CD14-positive monocyte (primary cell): ENCODE measurements at regions of chr6 and their contacts with region 1.

Region 1: GRCh38 chr6:134373282-134373922 is 55.5 kb upstream of the SGK1 start:
- DNase-seq: peak; percentile 95 to 99 (median 97)
- H3K4me3 ChIP-seq: peak overlapping the region; percentile 2 to 70 (median 53)
- H3K4me3 Mint-ChIP-seq: peak overlapping the region; percentile 64 to 86
- H3K27ac ChIP-seq: peak overlapping the region; percentile 97 to 98
- H3K27ac Mint-ChIP-seq: peak overlapping the region; percentile 97 to 99 (median 98)
- H3K4me1 ChIP-seq: peaks cover 54 to 55% of the 10 kb centered on the region in 2 donors
- H3K4me1 Mint-ChIP-seq: peaks cover 62% of the 10 kb centered on the region
- H3K27me3 ChIP-seq: no peaks in the 10 kb centered on the region
- H3K27me3 Mint-ChIP-seq: peaks cover 0 to 8% (median 2%) of the 10 kb centered on the region in 3 donors
- CTCF ChIP-seq: no peak

Region 2: GRCh38 chr6:134223796-134224420 is 149.5 kb before region 1 on chr6:
- intact Hi-C with region 1: no loop called
- DNase-seq: no peak
- H3K4me3 ChIP-seq: no peak overlapping the region
- H3K4me3 Mint-ChIP-seq: no peak overlapping the region
- H3K27ac ChIP-seq: no peak overlapping the region
- H3K27ac Mint-ChIP-seq: no peak overlapping the region
- H3K4me1 ChIP-seq: peaks cover 7 to 9% of the 10 kb centered on the region in 2 donors
- H3K4me1 Mint-ChIP-seq: peaks cover 7% of the 10 kb centered on the region
- H3K27me3 ChIP-seq: no peaks in the 10 kb centered on the region
- H3K27me3 Mint-ChIP-seq: peaks cover 0 to 4% (median 0%) of the 10 kb centered on the region in 3 donors
- CTCF ChIP-seq: no peak

Region 3: GRCh38 chr6:134247231-134247833 is 126.1 kb before region 1 on chr6:
- intact Hi-C with region 1: loop called in 1 of 2 experiments (anchors 5 kb)
- DNase-seq: peak; percentile 46 to 94 (median 87)
- H3K4me3 ChIP-seq: peak overlapping the region in 1 of 3 experiments; percentile 34
- H3K4me3 Mint-ChIP-seq: peak overlapping the region in 1 of 2 donors; percentile 53
- H3K27ac ChIP-seq: peak overlapping the region; percentile 69 to 80
- H3K27ac Mint-ChIP-seq: peak overlapping the region; percentile 90 to 96 (median 94)
- H3K4me1 ChIP-seq: peaks cover 30 to 43% of the 10 kb centered on the region in 2 donors
- H3K4me1 Mint-ChIP-seq: peaks cover 50% of the 10 kb centered on the region
- H3K27me3 ChIP-seq: no peaks in the 10 kb centered on the region
- H3K27me3 Mint-ChIP-seq: peaks cover 0 to 3% (median 0%) of the 10 kb centered on the region in 3 donors
- CTCF ChIP-seq: no peak

Region 4: GRCh38 chr6:134339216-134339615 is 34.2 kb before region 1 on chr6:
- intact Hi-C with region 1: loop called in 1 of 2 experiments (anchors 5 kb)
- DNase-seq: no peak
- H3K4me3 ChIP-seq: no peak overlapping the region
- H3K4me3 Mint-ChIP-seq: no peak overlapping the region
- H3K27ac ChIP-seq: no peak overlapping the region
- H3K27ac Mint-ChIP-seq: peak overlapping the region in 4 of 7 donors; percentile 25 to 63 (median 54)
- H3K4me1 ChIP-seq: peaks cover 40 to 41% of the 10 kb centered on the region in 2 donors
- H3K4me1 Mint-ChIP-seq: peaks cover 41% of the 10 kb centered on the region
- H3K27me3 ChIP-seq: no peaks in the 10 kb centered on the region
- H3K27me3 Mint-ChIP-seq: peaks cover 0 to 2% (median 0%) of the 10 kb centered on the region in 3 donors
- CTCF ChIP-seq: no peak

Region 5: GRCh38 chr6:134416418-134417154 is 43.2 kb after region 1 on chr6:
- intact Hi-C with region 1: loop called in 1 of 2 experiments (anchors 5 kb)
- DNase-seq: peak; percentile 29 to 45 (median 38)
- H3K4me3 ChIP-seq: no peak overlapping the region
- H3K4me3 Mint-ChIP-seq: no peak overlapping the region
- H3K27ac ChIP-seq: peak overlapping the region in 1 of 2 donors; percentile 98
- H3K27ac Mint-ChIP-seq: peak overlapping the region in 6 of 7 donors; percentile 56 to 100 (median 94)
- H3K4me1 ChIP-seq: peaks cover 49 to 51% of the 10 kb centered on the region in 2 donors
- H3K4me1 Mint-ChIP-seq: peaks cover 55% of the 10 kb centered on the region
- H3K27me3 ChIP-seq: no peaks in the 10 kb centered on the region
- H3K27me3 Mint-ChIP-seq: peaks cover 2 to 5% (median 2%) of the 10 kb centered on the region in 3 donors
- CTCF ChIP-seq: no peak

Region 6: DNA sequence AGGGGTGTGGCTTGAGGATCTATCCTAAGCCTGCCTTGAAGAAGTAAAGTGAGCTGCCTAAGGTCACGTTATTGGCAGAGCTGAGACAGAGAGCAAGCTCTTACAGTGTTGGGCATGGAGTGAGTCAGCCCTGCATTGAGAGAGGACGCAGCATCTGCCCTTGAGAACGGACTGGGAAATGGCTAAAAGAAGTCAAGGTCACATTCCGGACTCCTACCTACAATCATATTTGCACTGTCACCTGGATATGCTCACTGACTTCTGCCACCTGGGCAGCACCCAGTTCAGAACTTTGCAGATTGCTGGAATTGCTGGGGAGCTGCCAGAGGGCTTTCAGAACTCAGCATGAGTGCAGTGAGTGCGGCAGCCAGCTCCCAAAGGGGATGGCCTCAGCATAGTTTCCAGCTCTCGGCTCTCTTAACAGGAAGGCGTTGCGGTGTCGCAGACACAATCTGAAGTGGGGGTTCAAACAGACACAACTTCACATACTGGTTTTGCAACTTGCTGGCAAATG is 143.8 kb after region 1 on chr6:
- intact Hi-C with region 1: loop called in 1 of 2 experiments (anchors 10 kb)
- DNase-seq: peak; percentile 34 to 57 (median 50)
- H3K4me3 ChIP-seq: no peak overlapping the region
- H3K4me3 Mint-ChIP-seq: peak overlapping the region in 1 of 2 donors; percentile 7
- H3K27ac ChIP-seq: peak overlapping the region in 1 of 2 donors; percentile 64
- H3K27ac Mint-ChIP-seq: peak overlapping the region; percentile 73 to 92 (median 88)
- H3K4me1 ChIP-seq: peaks cover 33 to 40% of the 10 kb centered on the region in 2 donors
- H3K4me1 Mint-ChIP-seq: peaks cover 50% of the 10 kb centered on the region
- H3K27me3 ChIP-seq: no peaks in the 10 kb centered on the region
- H3K27me3 Mint-ChIP-seq: no peaks in the 10 kb centered on the region
- CTCF ChIP-seq: no peak